SK-N-SH (cell line): ENCODE measurements at regions of chr17 and their contacts with region 1.

Region 1: DNA sequence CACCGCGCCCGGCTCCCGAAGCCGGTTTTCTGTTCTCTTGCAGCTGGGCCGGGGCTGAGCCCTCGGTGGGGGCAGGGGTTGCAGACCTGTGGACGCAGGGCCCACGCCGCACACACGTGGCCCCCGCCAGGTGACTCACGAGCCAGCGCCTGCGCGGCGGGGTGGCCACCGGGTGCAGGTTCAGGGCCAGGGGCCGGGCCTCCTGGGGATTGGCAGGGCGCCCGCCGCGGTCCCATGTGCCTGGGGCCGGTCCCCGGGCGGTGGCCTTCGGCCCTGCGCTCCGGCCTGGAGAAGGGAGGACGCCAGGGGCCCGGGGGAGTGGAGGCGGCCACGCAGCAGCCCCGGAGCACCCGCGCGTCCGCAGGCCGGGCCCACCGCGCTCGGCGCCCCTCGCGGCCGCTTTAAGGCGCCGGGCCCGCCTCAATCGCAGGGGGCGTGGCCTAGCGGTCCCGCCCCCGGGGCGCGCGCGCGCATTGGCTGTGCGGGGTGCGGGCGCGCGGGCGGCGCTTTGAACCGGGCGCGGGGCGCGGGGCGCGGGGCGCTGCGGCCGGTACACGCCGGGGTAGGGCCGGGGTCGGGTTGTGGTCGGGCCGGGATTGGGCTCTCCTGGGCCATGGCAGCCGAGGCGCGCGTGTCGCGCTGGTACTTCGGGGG is at the start of gene SLC25A10:
- DNase-seq: peak; percentile 99
- H3K4me3 ChIP-seq: peak within 1 kb of the TSS; percentile 73 to 80
- H3K27ac ChIP-seq: peak within 1 kb of the TSS; percentile 36 to 83
- H3K4me1 ChIP-seq: peaks cover 22 to 33% of the 10 kb centered on the region in 2 experiments; a peak in 3 of 4 replicates
- H3K27me3 ChIP-seq: no peaks in the 10 kb centered on the region
- CTCF ChIP-seq: no peak
- EP300 ChIP-seq: no peak
- RAD21 ChIP-seq: no peak
- polyA plus RNA-seq, gene SLC25A10: 29.9 and 34.7 TPM in 2 replicates

Region 2: DNA sequence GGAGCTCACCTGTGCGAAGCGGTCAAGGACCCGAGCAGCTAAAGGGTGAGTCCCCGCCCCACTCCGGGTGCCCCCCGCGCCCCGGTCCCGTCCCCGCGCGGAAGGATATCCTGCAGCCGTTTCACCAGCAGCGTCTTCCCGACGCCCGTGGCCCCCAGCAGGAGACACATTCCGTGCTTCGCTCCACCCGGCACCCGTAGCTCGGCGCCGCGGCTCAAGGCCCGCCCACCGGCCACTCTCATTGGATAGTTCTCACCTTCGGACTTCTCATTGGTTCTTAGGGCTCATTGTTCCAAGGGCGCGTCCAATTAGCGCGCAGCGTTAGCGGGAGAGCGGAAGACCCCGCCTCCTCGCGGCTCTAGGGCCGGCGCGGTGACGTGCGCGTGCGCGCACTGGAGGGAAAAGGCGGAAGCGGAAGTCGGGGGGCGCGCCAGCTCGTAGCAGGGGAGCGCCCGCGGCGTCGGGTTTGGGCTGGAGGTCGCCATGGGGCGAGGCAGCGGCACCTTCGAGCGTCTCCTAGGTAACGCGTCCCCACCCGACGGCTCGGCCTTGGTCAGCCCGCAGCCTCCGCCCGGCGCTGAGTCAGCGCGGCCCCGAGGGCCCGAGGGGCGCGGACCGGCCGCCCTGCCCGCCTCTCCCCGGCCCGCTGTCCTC is 28.2 kb before region 1 on chr17 and contains the starts of genes ARL16 and HGS:
- CTCF ChIA-PET with region 1: interaction called, 12 read pairs
- POLR2A ChIA-PET with region 1: interaction called, 7 read pairs
- DNase-seq: peak; percentile 100
- H3K4me3 ChIP-seq: peak within 1 kb of the TSS; percentile 94 to 99
- H3K27ac ChIP-seq: peak within 1 kb of the TSS; percentile 82 to 91
- H3K4me1 ChIP-seq: peaks cover 19 to 21% of the 10 kb centered on the region in 2 experiments; a peak in 3 of 4 replicates
- H3K27me3 ChIP-seq: no peaks in the 10 kb centered on the region
- CTCF ChIP-seq: no peak
- EP300 ChIP-seq: peak in 1 of 2 experiments; percentile 9; a peak in 1 of 4 replicates
- RAD21 ChIP-seq: no peak
- polyA plus RNA-seq, gene ARL16: 148 and 166 TPM in 2 replicates
- polyA plus RNA-seq, gene HGS: 184 and 192 TPM in 2 replicates

Region 3: DNA sequence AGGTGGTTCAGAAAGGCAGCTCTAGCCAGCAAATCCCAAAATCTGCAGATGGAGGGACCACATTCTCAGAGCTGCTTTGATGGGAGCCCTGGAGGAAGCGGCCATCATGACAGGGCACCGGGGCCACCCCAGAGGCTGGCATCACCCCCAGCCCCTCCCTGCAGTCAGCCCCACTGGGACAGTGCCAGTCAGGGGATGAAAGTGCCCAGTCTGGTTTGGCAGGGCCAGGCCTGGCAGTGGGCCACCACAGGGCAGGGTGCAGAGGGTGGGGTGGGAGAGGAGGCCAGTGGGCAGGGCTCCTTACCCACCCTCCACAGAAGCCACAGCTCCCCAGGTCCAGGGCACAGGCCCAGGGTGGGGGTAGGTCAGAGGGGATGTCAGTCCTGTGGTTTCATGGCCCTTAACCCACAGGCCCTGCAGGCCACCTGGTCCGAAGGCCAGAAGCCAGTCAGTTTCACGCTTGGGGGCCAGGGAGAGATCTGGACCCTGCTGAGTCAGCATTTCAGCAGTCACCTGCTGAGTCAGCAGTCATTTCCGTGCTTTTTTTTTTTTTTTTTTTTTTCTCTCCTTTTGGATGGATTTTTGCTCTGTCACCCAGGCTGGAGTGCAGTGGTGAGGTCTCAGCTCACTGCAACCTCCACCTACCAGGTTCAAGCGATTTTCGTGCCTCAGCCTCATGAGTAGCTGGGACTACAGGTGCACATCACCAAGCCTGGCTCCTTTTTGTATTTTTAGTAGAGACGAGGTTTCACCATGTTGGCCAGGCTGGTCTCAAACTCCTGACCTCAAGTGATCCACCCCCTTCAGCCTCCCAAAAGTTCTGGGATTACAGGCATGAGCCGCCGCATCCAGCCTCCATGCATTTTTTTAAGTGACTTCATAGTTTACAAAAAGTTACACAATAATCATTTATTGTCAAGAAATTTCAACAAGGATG is 10.5 kb after region 1 on chr17:
- CTCF ChIA-PET with region 1: interaction called, 33 read pairs
- POLR2A ChIA-PET with region 1: interaction called, 30 read pairs
- DNase-seq: peak; percentile 64
- H3K4me3 ChIP-seq: no peak overlapping the region
- H3K27ac ChIP-seq: no peak overlapping the region
- H3K4me1 ChIP-seq: peaks cover 0 to 3% of the 10 kb centered on the region in 2 experiments; a peak in 1 of 4 replicates
- H3K27me3 ChIP-seq: no peaks in the 10 kb centered on the region
- CTCF ChIP-seq: no peak
- EP300 ChIP-seq: no peak
- RAD21 ChIP-seq: no peak

Region 4: GRCh38 chr17:81860756-81861518 is 149.0 kb after region 1 on chr17:
- CTCF ChIA-PET with region 1: interaction called, 11 read pairs
- POLR2A ChIA-PET with region 1: interaction called, 9 read pairs
- DNase-seq: peak; percentile 100
- H3K4me3 ChIP-seq: peak overlapping the region; percentile 77 to 95
- H3K27ac ChIP-seq: peak overlapping the region; percentile 90 to 92
- H3K4me1 ChIP-seq: peaks cover 28 to 37% of the 10 kb centered on the region in 2 experiments
- H3K27me3 ChIP-seq: no peaks in the 10 kb centered on the region
- CTCF ChIP-seq: no peak
- EP300 ChIP-seq: no peak; a peak in 1 of 4 replicates
- RAD21 ChIP-seq: no peak